ENCODE measurements at regions of chr4 and their contacts with region 1.

Region 1: GRCh38 chr4:165493359-165493758 is 114.6 kb downstream of the CPE start:
- DNase-seq: peak; percentile 81
- H3K4me3 Mint-ChIP-seq: peak overlapping the region; percentile 14
- H3K27ac Mint-ChIP-seq: no peak overlapping the region
- H3K4me1 Mint-ChIP-seq: peaks cover 3% of the 10 kb centered on the region
- H3K27me3 Mint-ChIP-seq: peaks cover 11% of the 10 kb centered on the region

Region 2: GRCh38 chr4:165481053-165481835 is 12.1 kb before region 1 on chr4:
- CTCF ChIA-PET with region 1: interaction called, 20 read pairs
- POLR2A ChIA-PET with region 1: no interaction called
- intact Hi-C with region 1: no loop called
- DNase-seq: no peak
- H3K4me3 Mint-ChIP-seq: no peak overlapping the region
- H3K27ac Mint-ChIP-seq: no peak overlapping the region
- H3K4me1 Mint-ChIP-seq: no peaks in the 10 kb centered on the region
- H3K27me3 Mint-ChIP-seq: peaks cover 4% of the 10 kb centered on the region

Region 3: DNA sequence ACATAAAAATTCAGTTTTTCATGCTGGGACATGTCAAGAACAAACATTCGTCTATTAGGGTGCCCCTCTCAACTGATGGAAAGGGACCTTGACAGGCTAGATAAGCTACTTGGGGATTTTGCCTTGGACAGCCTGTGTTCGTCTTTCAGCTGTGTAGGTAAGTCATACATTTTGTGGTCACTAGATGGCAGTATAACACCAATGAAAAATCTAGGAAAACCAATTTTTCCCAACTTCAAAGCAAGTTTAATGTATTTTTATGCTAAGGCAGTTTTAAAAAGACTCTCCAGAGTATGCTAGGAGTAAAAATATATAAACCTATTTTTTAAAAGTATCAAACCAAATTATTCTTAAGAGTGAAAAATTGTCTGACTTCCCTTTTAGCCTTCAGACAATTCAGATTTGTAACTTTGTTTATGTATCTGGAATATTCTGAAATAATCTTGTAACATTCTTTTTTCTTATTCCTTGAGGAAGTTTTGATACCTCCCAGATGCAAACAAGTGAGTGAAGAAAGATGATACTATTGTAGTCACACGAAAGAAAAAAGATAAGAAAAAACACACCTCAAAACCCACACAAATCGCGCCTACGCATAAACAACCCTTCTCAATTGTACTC is 43.8 kb after region 1 on chr4:
- CTCF ChIA-PET with region 1: interaction called, 17 read pairs
- POLR2A ChIA-PET with region 1: no interaction called
- intact Hi-C with region 1: loop called (anchors 2 kb)
- DNase-seq: no peak
- H3K4me3 Mint-ChIP-seq: no peak overlapping the region
- H3K27ac Mint-ChIP-seq: no peak overlapping the region
- H3K4me1 Mint-ChIP-seq: no peaks in the 10 kb centered on the region
- H3K27me3 Mint-ChIP-seq: peaks cover 5% of the 10 kb centered on the region

Region 4: DNA sequence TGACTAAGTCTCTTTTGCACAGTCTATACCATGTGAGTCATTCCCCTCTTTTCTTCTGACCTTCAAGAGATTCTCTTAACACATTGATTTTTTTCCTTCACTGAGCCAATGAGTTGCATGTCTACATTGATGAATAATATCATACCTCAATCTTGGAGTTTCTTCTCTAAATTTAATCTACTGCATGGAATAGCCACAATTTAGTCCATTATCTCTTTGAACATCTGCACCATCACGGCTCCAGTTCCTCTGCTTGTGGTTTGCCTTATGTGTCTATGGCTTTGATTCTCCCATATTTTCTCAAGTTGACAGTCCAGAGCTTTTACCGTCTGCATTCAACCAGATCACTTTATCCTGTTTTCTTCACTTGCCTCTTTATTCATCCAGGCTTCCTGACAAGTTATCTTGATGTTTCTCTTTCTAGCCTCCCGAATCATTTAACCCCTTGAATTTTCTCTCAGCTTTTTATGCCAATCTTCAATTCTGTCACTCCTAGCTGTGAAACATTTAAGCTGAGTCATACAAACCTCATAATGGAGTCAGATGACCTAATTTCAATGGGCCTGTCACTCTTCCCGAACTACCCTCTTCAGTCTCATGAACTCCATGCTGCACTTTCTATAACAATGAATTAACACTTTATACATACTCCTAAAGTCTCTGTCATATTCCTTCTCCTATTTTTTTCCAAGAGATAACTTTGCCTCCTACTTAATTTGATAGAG is 107.8 kb after region 1 on chr4:
- CTCF ChIA-PET with region 1: no interaction called
- POLR2A ChIA-PET with region 1: no interaction called
- intact Hi-C with region 1: no loop called
- DNase-seq: no peak
- H3K4me3 Mint-ChIP-seq: no peak overlapping the region
- H3K27ac Mint-ChIP-seq: no peak overlapping the region
- H3K4me1 Mint-ChIP-seq: no peaks in the 10 kb centered on the region
- H3K27me3 Mint-ChIP-seq: no peaks in the 10 kb centered on the region

Region 5: GRCh38 chr4:166091912-166092510 is 598.7 kb after region 1 on chr4:
- CTCF ChIA-PET with region 1: interaction called, 20 read pairs
- POLR2A ChIA-PET with region 1: no interaction called
- intact Hi-C with region 1: no loop called
- DNase-seq: no peak
- H3K4me3 Mint-ChIP-seq: no peak overlapping the region
- H3K27ac Mint-ChIP-seq: no peak overlapping the region
- H3K4me1 Mint-ChIP-seq: no peaks in the 10 kb centered on the region
- H3K27me3 Mint-ChIP-seq: no peaks in the 10 kb centered on the region